Panc1 (cell line): ENCODE measurements at regions of chrX and their contacts with region 1.

Region 1: GRCh38 chrX:155819966-155820491 is 61.1 kb upstream of the VAMP7 start:
- DNase-seq: peak; percentile 66
- ATAC-seq: peak; percentile 95
- H3K4me3 ChIP-seq: no peak overlapping the region
- H3K27ac ChIP-seq: no peak overlapping the region
- H3K4me1 ChIP-seq: no peaks in the 10 kb centered on the region
- H3K27me3 ChIP-seq: no peaks in the 10 kb centered on the region
- CTCF ChIP-seq: peak; percentile 78

Region 2: GRCh38 chrX:155612312-155613224 is 207.5 kb before region 1 on chrX and contains the start of gene TMLHE:
- CTCF ChIA-PET with region 1: no interaction called
- POLR2A ChIA-PET with region 1: no interaction called
- in situ Hi-C with region 1: no loop called
- intact Hi-C with region 1: no loop called
- DNase-seq: no peak
- ATAC-seq: peak; percentile 99
- H3K4me3 ChIP-seq: peak within 1 kb of the TSS; percentile 86 to 94
- H3K27ac ChIP-seq: peak within 1 kb of the TSS; percentile 96
- H3K4me1 ChIP-seq: peaks cover 5% of the 10 kb centered on the region
- H3K27me3 ChIP-seq: no peaks in the 10 kb centered on the region
- CTCF ChIP-seq: no peak
- total RNA-seq, gene TMLHE: 36.4 TPM

Region 3: DNA sequence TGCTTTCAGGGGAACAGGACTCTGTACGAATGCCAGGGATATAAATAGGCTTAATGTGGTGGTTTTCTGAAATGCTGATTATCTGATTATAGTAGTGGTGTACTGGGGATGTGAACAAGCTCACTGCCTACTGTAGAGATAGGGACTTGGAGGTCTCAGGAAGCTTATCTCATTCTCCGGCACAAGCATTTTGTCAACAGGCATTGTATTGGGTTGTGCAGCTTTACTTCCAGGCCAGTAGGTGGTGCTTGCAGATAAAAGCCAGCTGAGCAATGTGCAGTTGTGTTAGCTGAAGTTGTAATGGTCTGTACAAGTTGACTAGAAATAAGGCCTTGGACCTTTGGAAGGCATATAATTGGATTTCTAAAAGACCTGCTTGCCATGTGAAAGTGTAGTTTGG is 157.7 kb before region 1 on chrX:
- CTCF ChIA-PET with region 1: no interaction called
- POLR2A ChIA-PET with region 1: no interaction called
- in situ Hi-C with region 1: no loop called
- intact Hi-C with region 1: loop called (anchors 10 kb)
- DNase-seq: no peak
- ATAC-seq: no peak
- H3K4me3 ChIP-seq: no peak overlapping the region
- H3K27ac ChIP-seq: no peak overlapping the region
- H3K4me1 ChIP-seq: no peaks in the 10 kb centered on the region
- H3K27me3 ChIP-seq: no peaks in the 10 kb centered on the region
- CTCF ChIP-seq: peak; percentile 49

Region 4: GRCh38 chrX:155985208-155985607 is 165.2 kb after region 1 on chrX:
- CTCF ChIA-PET with region 1: no interaction called
- POLR2A ChIA-PET with region 1: no interaction called
- in situ Hi-C with region 1: no loop called
- intact Hi-C with region 1: no loop called
- DNase-seq: no peak
- ATAC-seq: no peak
- H3K4me3 ChIP-seq: no peak overlapping the region
- H3K27ac ChIP-seq: no peak overlapping the region
- H3K4me1 ChIP-seq: no peaks in the 10 kb centered on the region
- H3K27me3 ChIP-seq: no peaks in the 10 kb centered on the region
- CTCF ChIP-seq: no peak